Posterior cingulate gyrus (tissue), 11 donors: ENCODE measurements at regions of chr14 and their contacts with region 1.

Region 1: GRCh38 chr14:31357279-31357678 is 63.1 kb downstream of the HEATR5A start:
- DNase-seq: no peak

Region 2: DNA sequence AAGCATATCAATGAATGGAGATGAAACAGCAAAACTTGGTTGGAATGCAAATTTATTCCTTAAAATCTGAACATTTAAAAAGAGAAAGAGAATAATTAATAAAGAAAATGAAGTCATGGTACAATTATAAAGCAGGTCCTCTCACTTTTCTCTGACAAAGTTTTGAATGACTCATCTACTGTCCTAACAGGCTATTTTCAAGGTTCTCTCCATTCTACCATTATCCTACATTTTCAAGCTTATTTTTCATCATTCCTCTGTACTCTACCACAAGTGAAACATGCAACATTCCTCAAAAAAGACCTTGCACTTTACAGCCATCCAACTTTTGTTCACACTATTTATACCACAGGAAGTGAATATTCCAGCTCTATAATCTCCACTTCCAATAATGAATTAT is 368.8 kb before region 1 on chr14:
- intact Hi-C with region 1: loop called (anchors 10 kb)
- DNase-seq: no peak

Region 3: GRCh38 chr14:31207755-31208545 is 149.3 kb before region 1 on chr14 and contains the start of gene HECTD1:
- intact Hi-C with region 1: loop called (anchors 5 kb)
- DNase-seq: peak; percentile 70 to 97 (median 83)

Region 4: GRCh38 chr14:31307198-31307597 is 50.1 kb before region 1 on chr14:
- intact Hi-C with region 1: no loop called
- DNase-seq: no peak